A549 (cell line): ENCODE measurements at regions of chr17 and their contacts with region 1.

Region 1: GRCh38 chr17:7745748-7746470 is 28.4 kb downstream of the DNAH2 start:
- DNase-seq: peak; percentile 70 to 75
- ATAC-seq: peak; percentile 55 to 65; a peak in 5 of 6 replicates
- H3K4me3 ChIP-seq: no peak overlapping the region
- H3K27ac ChIP-seq: peak overlapping the region in 1 of 2 experiments; percentile 24; a peak in 3 of 6 replicates
- H3K4me1 ChIP-seq: peaks cover 12% of the 10 kb centered on the region
- CTCF ChIP-seq: peak; percentile 13; the same call in 1 of the 3 replicates
- EP300 ChIP-seq: no peak
- POLR2A ChIP-seq: no peak
- RAD21 ChIP-seq: no peak

Region 2: GRCh38 chr17:7767405-7768021 is 21.6 kb after region 1 on chr17:
- CTCF ChIA-PET with region 1: interaction called, 22 read pairs
- POLR2A ChIA-PET with region 1: no interaction called
- DNase-seq: no peak
- ATAC-seq: peak; percentile 27 to 48; a peak in 4 of 6 replicates
- H3K4me3 ChIP-seq: no peak overlapping the region
- H3K27ac ChIP-seq: no peak overlapping the region
- H3K4me1 ChIP-seq: no peaks in the 10 kb centered on the region
- CTCF ChIP-seq: no peak
- EP300 ChIP-seq: no peak
- POLR2A ChIP-seq: no peak
- RAD21 ChIP-seq: no peak

Region 3: GRCh38 chr17:7809086-7809790 is 63.3 kb after region 1 on chr17:
- CTCF ChIA-PET with region 1: interaction called, 20 read pairs
- POLR2A ChIA-PET with region 1: no interaction called
- DNase-seq: no peak
- ATAC-seq: peak; percentile 32 to 38; a peak in 3 of 6 replicates
- H3K4me3 ChIP-seq: no peak overlapping the region
- H3K27ac ChIP-seq: peak overlapping the region in 1 of 2 experiments; percentile 47; a peak in 1 of 6 replicates
- H3K4me1 ChIP-seq: peaks cover 11% of the 10 kb centered on the region
- CTCF ChIP-seq: no peak
- EP300 ChIP-seq: no peak
- POLR2A ChIP-seq: no peak
- RAD21 ChIP-seq: no peak

Region 4: DNA sequence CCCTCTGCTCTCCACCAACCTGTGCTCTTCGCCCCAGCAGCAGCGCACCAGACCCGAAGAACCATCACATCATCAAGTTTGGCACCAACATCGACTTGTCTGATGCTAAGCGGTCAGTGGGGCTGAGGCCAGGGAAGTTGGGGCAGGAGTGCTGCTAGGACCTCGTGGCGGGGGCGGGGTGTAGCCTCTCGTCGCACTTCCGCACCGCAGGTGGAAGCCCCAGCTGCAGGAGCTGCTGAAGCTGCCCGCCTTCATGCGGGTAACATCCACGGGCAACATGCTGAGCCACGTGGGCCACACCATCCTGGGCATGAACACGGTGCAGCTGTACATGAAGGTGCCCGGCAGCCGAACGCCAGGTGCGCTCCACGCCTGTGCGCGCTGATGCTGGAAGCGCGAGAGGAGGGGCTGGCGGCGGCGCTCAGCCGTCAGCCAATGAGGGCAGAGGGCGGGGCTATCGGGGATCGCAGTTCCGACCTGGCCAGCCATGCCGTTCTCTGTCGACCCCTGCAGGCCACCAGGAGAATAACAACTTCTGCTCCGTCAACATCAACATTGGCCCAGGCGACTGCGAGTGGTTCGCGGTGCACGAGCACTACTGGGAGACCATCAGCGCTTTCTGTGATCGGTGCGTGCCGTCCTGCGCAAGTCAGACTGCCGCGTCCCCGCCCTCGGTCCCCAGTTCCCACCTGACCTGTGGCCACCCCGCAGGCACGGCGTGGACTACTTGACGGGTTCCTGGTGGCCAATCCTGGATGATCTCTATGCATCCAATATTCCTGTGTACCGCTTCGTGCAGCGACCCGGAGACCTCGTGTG is 105.7 kb after region 1 on chr17:
- CTCF ChIA-PET with region 1: interaction called, 77 read pairs
- POLR2A ChIA-PET with region 1: interaction called, 5 read pairs
- DNase-seq: peak; percentile 78 to 93
- ATAC-seq: peak; percentile 66 to 86
- H3K4me3 ChIP-seq: no peak overlapping the region
- H3K27ac ChIP-seq: no peak overlapping the region
- H3K4me1 ChIP-seq: peaks cover 23% of the 10 kb centered on the region; the same call in 2 of the 3 replicates
- CTCF ChIP-seq: peak; percentile 98
- EP300 ChIP-seq: no peak
- POLR2A ChIP-seq: peak; percentile 26; the same call in 1 of the 2 replicates
- RAD21 ChIP-seq: peak; percentile 98

Region 5: GRCh38 chr17:7915611-7916382 is 169.9 kb after region 1 on chr17 and contains the start of gene RNF227:
- CTCF ChIA-PET with region 1: interaction called, 11 read pairs
- POLR2A ChIA-PET with region 1: no interaction called
- DNase-seq: peak; percentile 62 to 94
- ATAC-seq: peak; percentile 77 to 80
- H3K4me3 ChIP-seq: peak within 1 kb of the TSS; percentile 48
- H3K27ac ChIP-seq: peak within 1 kb of the TSS; percentile 82 to 92
- H3K4me1 ChIP-seq: peaks cover 13% of the 10 kb centered on the region
- CTCF ChIP-seq: no peak
- EP300 ChIP-seq: no peak
- POLR2A ChIP-seq: peak; percentile 86
- RAD21 ChIP-seq: no peak
- polyA plus RNA-seq, gene RNF227: 2.1 and 2.4 TPM in 2 replicates